Posterior vena cava (tissue), 2 donors: ENCODE measurements at regions of chr3 and their contacts with region 1.

Region 1: GRCh38 chr3:152376351-152377183 is 107.8 kb downstream of the MBNL1 start:
- DNase-seq: no peak

Region 2: GRCh38 chr3:152309535-152310307 is 66.8 kb before region 1 on chr3:
- intact Hi-C with region 1: no loop called
- DNase-seq: no peak

Region 3: GRCh38 chr3:152688313-152688712 is 311.7 kb after region 1 on chr3:
- intact Hi-C with region 1: loop called in 1 of 2 experiments (anchors 5 kb)
- DNase-seq: no peak